Caco-2 (cell line): ENCODE measurements at regions of chr2 and their contacts with region 1.

Region 1: DNA sequence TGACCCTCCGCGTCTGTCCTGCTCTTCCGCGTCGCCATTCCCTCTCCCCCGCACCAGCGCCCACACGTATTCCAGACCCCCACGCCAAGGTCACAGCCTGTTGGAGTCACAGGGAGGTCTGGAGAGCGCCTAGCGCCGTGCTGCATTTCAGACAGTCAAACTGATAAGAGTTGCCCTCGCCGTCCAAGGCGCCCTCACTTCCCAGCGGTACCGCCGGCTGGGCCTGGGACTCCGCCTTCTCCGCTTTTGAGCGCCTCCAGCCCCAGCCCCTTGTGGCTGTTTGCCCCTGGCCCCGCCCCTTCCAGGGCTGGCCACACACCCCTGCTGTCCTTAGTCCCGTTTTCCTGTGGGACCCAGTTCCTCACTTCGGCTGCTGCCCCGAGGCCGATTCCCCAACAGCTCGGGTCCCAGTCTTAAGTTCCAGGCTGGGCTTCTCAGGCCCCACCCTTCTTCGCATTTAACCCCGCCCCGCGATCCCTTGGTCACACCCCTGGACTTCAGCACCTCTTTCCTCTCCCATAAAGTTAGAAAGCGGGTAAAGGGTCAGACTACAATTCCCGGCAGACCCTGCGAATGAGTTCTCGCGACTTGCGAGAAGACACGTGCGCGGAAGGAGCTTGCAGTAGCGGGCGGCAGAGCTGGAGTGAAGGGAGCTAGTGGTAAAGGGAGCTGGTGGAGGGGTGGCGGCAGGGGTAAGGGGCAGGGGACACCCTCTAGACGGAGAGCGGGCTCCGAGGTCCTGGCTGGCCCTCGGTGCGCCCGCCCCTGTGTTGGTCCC is at the start of gene GMPPA:
- DNase-seq: peak; percentile 98 to 99
- H3K4me3 ChIP-seq: peak within 1 kb of the TSS; percentile 86
- H3K4me3 Mint-ChIP-seq: peak within 1 kb of the TSS; percentile 98
- H3K27ac Mint-ChIP-seq: peak within 1 kb of the TSS; percentile 94
- H3K4me1 ChIP-seq: peaks cover 14% of the 10 kb centered on the region; the same call in 1 of the 2 replicates
- H3K4me1 Mint-ChIP-seq: peaks cover 16% of the 10 kb centered on the region
- H3K27me3 ChIP-seq: no peaks in the 10 kb centered on the region
- H3K27me3 Mint-ChIP-seq: peaks cover under 1% of the 10 kb centered on the region
- CTCF ChIP-seq: no peak
- total RNA-seq, gene GMPPA: 51.0 and 53.7 TPM in 2 replicates

Region 2: DNA sequence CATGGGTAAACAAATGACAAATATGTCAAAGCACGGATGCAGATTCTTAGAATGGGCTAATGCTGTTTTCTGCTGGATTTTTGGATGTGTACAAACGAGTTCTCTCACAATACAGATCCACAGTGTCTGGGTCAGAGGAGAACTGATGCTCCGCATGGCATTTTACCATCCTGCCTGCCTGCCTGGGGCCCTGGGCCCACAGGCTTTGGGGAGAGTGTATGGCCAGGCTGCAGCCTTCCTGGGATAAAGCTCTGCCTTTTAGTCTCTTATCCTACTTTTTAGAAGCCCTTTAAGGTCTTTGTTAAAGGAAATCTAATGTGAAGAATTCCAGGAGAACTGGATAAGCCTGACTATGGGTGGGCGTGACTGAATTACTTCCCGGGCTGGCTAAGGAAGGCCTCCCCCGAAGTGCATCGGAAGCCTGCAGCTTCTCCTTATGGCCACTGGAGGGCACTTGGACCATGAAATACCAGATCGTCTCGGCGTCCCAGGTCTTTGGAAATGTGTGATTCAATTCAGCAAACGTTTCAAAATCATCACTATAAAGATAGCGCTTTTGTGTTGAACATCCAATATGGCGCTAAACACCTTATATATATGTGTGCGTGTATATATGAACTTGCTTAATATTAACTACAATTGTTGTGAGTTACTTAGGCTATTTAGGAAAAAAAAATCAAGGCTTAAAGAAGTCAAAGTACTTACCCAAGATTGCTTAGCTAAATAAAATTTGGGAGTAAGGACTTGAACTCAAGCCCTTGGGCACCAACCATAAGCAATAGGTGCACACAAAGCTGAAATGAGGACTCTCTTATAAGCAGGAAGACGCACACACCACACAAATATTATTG is 95.6 kb before region 1 on chr2:
- CTCF ChIA-PET with region 1: interaction called, 11 read pairs
- POLR2A ChIA-PET with region 1: no interaction called
- intact Hi-C with region 1: loop called (anchors 1 kb)
- DNase-seq: peak; percentile 78 to 80
- H3K4me3 ChIP-seq: no peak overlapping the region
- H3K4me3 Mint-ChIP-seq: no peak overlapping the region
- H3K27ac Mint-ChIP-seq: no peak overlapping the region
- H3K4me1 ChIP-seq: peaks cover 28% of the 10 kb centered on the region
- H3K4me1 Mint-ChIP-seq: peaks cover 28% of the 10 kb centered on the region
- H3K27me3 ChIP-seq: no peaks in the 10 kb centered on the region
- H3K27me3 Mint-ChIP-seq: no peaks in the 10 kb centered on the region
- CTCF ChIP-seq: peak; percentile 82 to 95

Region 3: GRCh38 chr2:219466816-219467748 is 31.4 kb before region 1 on chr2:
- CTCF ChIA-PET with region 1: no interaction called
- POLR2A ChIA-PET with region 1: no interaction called
- intact Hi-C with region 1: no loop called
- DNase-seq: no peak
- H3K4me3 ChIP-seq: no peak overlapping the region
- H3K4me3 Mint-ChIP-seq: no peak overlapping the region
- H3K27ac Mint-ChIP-seq: no peak overlapping the region
- H3K4me1 ChIP-seq: no peaks in the 10 kb centered on the region
- H3K4me1 Mint-ChIP-seq: no peaks in the 10 kb centered on the region
- H3K27me3 ChIP-seq: no peaks in the 10 kb centered on the region
- H3K27me3 Mint-ChIP-seq: no peaks in the 10 kb centered on the region
- CTCF ChIP-seq: no peak

Region 4: DNA sequence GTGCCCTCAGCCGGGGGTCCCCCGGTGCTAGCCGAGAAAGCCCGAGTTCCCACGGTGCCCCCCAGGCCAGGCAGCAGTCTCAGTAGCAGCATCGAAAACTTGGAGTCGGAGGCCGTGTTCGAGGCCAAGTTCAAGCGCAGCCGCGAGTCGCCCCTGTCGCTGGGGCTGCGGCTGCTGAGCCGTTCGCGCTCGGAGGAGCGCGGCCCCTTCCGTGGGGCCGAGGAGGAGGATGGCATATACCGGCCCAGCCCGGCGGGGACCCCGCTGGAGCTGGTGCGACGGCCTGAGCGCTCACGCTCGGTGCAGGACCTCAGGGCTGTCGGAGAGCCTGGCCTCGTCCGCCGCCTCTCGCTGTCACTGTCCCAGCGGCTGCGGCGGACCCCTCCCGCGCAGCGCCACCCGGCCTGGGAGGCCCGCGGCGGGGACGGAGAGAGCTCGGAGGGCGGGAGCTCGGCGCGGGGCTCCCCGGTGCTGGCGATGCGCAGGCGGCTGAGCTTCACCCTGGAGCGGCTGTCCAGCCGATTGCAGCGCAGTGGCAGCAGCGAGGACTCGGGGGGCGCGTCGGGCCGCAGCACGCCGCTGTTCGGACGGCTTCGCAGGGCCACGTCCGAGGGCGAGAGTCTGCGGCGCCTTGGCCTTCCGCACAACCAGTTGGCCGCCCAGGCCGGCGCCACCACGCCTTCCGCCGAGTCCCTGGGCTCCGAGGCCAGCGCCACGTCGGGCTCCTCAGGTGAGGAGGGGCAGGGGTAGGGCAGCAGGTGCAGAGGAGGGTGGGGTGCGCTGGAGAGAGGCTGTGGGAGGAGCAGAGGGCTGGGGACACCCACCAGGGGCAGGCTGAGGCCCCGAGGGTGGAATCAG is 13.9 kb before region 1 on chr2:
- CTCF ChIA-PET with region 1: interaction called, 27 read pairs
- POLR2A ChIA-PET with region 1: interaction called, 3 read pairs
- intact Hi-C with region 1: no loop called
- DNase-seq: no peak
- H3K4me3 ChIP-seq: peak overlapping the region; percentile 16
- H3K4me3 Mint-ChIP-seq: peak overlapping the region; percentile 49
- H3K27ac Mint-ChIP-seq: no peak overlapping the region
- H3K4me1 ChIP-seq: peaks cover 11% of the 10 kb centered on the region; the same call in 1 of the 2 replicates
- H3K4me1 Mint-ChIP-seq: no peaks in the 10 kb centered on the region
- H3K27me3 ChIP-seq: peaks cover 3% of the 10 kb centered on the region
- H3K27me3 Mint-ChIP-seq: peaks cover 8% of the 10 kb centered on the region
- CTCF ChIP-seq: no peak

Region 5: GRCh38 chr2:219521066-219521880 is 22.8 kb after region 1 on chr2:
- CTCF ChIA-PET with region 1: interaction called, 243 read pairs
- POLR2A ChIA-PET with region 1: interaction called, 8 read pairs
- intact Hi-C with region 1: loop called (anchors 1 kb)
- DNase-seq: peak; percentile 73 to 74
- H3K4me3 ChIP-seq: 0 out of 2 replicates have a peak overlapping the region, but pooled peaks have one; percentile 5
- H3K4me3 Mint-ChIP-seq: peak overlapping the region; percentile 58
- H3K27ac Mint-ChIP-seq: peak overlapping the region; percentile 73
- H3K4me1 ChIP-seq: peaks cover 24% of the 10 kb centered on the region
- H3K4me1 Mint-ChIP-seq: peaks cover 22% of the 10 kb centered on the region
- H3K27me3 ChIP-seq: no peaks in the 10 kb centered on the region
- H3K27me3 Mint-ChIP-seq: peaks cover 13% of the 10 kb centered on the region
- CTCF ChIP-seq: peak; percentile 81 to 97

Region 6: DNA sequence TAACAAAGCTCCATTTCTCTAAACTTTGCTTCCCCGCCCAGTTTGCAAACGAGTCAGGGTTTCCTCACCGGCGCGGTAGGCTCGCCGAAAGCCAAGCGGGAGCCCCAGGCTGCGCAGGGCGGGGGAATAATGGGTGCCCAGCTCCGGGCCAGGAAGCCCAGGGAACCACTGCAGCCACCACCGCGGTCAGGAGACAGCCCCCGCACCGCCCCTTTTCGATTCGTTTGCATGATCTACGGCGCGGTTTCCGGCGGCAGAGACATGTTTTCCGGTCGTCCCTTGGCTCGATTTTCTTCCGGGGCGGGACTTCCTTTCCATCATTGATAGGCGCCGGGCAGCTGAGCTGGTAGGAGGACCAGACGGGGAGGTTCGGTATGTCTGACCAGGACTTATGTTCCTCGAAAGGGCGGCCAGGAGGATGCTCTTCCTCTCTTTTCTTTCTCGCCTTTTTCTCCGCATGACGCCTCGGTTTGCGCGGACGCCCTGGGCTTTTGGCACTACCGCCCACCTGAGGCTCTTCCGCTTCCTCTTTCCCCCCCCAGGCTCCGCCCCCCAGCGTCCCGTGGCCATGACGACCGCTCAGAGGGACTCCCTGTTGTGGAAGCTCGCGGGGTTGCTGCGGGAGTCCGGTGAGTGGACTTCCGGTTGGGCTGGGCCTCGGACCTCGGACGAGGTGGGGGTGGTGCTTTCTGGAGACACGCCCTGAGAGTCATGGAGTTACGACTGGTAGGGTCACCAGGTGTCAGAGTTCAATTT is 99.3 kb after region 1 on chr2 and contains the start of gene STK11IP:
- CTCF ChIA-PET with region 1: interaction called, 6 read pairs
- POLR2A ChIA-PET with region 1: interaction called, 9 read pairs
- intact Hi-C with region 1: loop called (anchors 1 kb)
- DNase-seq: peak; percentile 97 to 99
- H3K4me3 ChIP-seq: peak within 1 kb of the TSS; percentile 72
- H3K4me3 Mint-ChIP-seq: peak within 1 kb of the TSS; percentile 96
- H3K27ac Mint-ChIP-seq: peak within 1 kb of the TSS; percentile 98
- H3K4me1 ChIP-seq: peaks cover 23% of the 10 kb centered on the region
- H3K4me1 Mint-ChIP-seq: no peaks in the 10 kb centered on the region
- H3K27me3 ChIP-seq: no peaks in the 10 kb centered on the region
- H3K27me3 Mint-ChIP-seq: no peaks in the 10 kb centered on the region
- CTCF ChIP-seq: no peak
- total RNA-seq, gene STK11IP: 21.7 and 24.3 TPM in 2 replicates

Region 7: DNA sequence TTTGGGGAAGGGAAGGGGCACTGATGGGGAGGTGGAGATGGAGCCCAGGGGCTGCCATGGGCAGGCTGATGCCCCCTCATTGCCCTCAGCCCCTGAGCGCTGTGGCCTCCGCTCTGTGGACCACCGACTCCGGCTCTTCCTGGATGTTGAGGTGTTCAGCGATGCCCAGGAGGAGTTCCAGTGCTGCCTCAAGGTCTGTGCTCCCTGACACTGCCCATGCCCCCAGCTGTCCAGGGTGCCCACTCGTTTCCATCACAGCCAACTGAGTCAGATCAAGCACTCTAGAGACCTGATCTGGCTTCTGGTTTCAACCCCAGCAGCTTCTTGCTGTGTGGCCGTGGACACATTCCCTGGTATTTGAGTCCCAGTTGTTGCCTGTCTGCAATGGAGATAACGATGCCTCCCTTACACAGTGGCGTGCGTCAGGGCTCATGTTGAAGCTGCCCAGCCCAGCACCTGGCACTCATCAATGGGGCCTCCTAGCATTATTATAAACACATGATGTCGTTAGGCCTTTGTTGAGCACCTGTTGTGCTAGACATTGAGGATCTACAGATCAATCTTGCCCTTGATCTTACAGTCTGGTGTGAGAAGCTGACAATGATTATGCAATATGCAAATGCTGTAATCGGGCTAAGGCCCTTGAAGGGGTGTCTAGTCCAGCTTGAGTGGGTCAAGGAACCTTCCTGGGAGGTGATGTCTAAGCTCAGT is 113.6 kb after region 1 on chr2:
- CTCF ChIA-PET with region 1: no interaction called
- POLR2A ChIA-PET with region 1: no interaction called
- intact Hi-C with region 1: no loop called
- DNase-seq: no peak
- H3K4me3 ChIP-seq: no peak overlapping the region
- H3K4me3 Mint-ChIP-seq: no peak overlapping the region
- H3K27ac Mint-ChIP-seq: no peak overlapping the region
- H3K4me1 ChIP-seq: no peaks in the 10 kb centered on the region
- H3K4me1 Mint-ChIP-seq: no peaks in the 10 kb centered on the region
- H3K27me3 ChIP-seq: no peaks in the 10 kb centered on the region
- H3K27me3 Mint-ChIP-seq: no peaks in the 10 kb centered on the region
- CTCF ChIP-seq: no peak